GM10248 (cell line): ENCODE measurements at regions of chr11 and their contacts with region 1.

Region 1: DNA sequence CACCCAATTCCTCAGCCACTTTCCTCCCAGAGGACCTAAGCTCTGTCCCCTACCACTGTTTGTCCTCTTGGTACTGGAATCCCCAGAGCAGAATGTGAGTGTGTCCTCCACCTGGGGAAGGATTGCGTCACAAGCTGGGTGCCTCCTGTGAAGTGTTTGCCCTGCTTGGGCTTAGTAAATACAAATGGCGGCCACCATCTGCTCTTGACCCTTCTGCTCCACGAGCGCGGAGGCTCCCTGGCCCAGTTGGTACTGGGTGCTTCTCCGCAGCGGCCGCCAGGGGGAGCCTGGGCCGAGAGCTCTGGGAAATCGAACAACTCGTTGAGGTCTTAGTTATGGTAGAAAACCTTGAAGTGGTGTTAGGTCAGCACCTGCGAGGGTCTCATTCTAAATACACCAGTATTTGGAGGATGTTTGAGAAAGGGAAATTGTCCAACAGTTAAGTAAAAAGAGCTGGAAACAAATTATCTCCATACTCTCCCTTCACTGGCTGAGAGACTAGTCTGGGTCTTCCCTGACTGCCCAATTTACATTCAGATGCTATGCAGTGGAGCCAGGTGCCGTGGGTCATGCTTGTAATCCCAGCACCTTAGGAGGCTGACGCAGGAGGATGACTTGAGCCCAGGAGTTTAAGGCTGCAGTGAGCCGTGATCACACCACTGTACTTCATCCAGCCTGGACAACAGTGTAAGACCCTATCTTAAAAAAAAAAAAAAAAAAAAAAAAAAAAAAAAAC is 74.6 kb upstream of the TEAD1 start:
- DNase-seq: peak; percentile 57
- CTCF ChIP-seq: peak; percentile 84

Region 2: DNA sequence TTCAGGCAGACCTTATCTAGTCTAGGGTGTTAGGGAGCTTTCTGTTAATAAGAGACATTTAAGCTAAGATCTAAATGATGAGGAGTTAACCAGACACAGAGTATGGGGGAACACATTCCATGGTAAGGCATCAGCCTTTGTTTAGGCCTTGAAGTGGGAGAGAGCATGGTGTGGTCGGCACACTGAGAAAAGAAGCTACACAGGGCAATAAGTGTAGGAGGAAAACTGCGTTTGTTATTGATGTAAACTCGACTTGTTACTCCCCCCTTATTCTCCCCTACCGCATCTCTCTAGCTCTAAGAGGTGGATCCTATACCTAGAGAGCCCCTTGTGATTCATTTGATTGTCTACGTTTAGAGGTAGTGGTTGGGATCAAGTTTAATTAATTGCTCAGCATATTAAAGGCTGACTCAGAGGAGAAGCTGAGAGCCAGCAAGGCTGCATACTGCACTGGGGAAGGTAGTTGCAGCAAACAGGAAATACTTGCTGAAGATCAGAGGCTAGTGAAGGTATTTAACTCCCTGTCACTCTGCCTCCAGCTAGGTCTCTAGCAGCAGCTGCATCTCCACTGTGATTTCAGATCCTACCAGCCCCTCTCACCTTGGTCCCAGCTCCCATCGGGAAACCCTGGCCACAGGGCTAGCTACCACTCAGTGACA is 12.1 kb before region 1 on chr11:
- CTCF ChIA-PET with region 1: interaction called, 20 read pairs
- POLR2A ChIA-PET with region 1: no interaction called
- DNase-seq: no peak
- CTCF ChIP-seq: no peak

Region 3: DNA sequence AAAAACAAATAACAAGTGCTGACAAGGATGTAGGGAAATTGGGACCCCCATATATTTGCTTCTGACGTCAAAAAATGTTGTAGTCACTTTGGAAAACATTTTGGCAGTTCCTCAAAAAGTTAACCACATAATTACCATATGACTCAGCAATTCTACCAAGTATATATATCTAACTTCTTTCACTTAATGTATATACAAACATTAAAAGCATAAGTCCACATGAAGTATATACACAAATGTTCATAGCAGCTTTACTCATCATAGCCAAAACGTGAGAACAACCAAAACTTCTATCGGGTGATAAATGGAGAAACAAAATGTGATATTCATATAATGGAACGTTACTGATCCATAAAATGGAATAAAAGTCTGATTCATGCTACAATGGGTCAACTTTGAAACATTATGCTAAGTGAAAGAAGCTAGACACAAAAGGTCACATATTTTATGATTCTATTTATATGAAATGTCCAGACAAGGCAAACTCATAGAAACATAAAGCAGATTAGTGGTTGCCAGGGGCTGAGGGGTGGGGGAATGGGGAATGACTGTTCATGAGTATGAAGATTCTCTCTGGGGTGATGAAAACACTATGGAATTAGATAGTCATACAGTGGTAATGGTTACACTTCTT is 26.0 kb after region 1 on chr11:
- CTCF ChIA-PET with region 1: no interaction called
- POLR2A ChIA-PET with region 1: no interaction called
- DNase-seq: no peak
- CTCF ChIP-seq: no peak